Transverse colon (tissue), 4 donors: ENCODE measurements at regions of chr5 and their contacts with region 1.

Region 1: GRCh38 chr5:72366324-72366976 is 46.3 kb downstream of the PTCD2 start:
- DNase-seq: peak; percentile 63
- H3K4me3 ChIP-seq: no peak overlapping the region
- H3K27ac ChIP-seq: no peak overlapping the region
- H3K4me1 ChIP-seq: peaks cover 0 to 8% (median 0%) of the 10 kb centered on the region in 4 donors
- H3K27me3 ChIP-seq: no peaks in the 10 kb centered on the region
- CTCF ChIP-seq: peak; percentile 69 to 75 (median 73)
- EP300 ChIP-seq: no peak
- POLR2A ChIP-seq: no peak

Region 2: GRCh38 chr5:72816311-72817145 is 450.1 kb after region 1 on chr5 and contains the start of gene TNPO1:
- in situ Hi-C with region 1: loop called in 2 of 4 experiments (anchors 25 kb)
- intact Hi-C with region 1: loop called (anchors 5 kb)
- DNase-seq: peak; percentile 94
- H3K4me3 ChIP-seq: peak within 1 kb of the TSS; percentile 61 to 90 (median 86)
- H3K27ac ChIP-seq: peak within 1 kb of the TSS; percentile 98 to 99 (median 99)
- H3K4me1 ChIP-seq: peaks cover 7 to 36% (median 19%) of the 10 kb centered on the region in 4 donors
- H3K27me3 ChIP-seq: no peaks in the 10 kb centered on the region
- CTCF ChIP-seq: no peak
- EP300 ChIP-seq: no peak
- POLR2A ChIP-seq: peak; percentile 96
- total RNA-seq, gene TNPO1: 30.3 to 391 (median 102) TPM

Region 3: GRCh38 chr5:72883864-72884263 is 517.4 kb after region 1 on chr5:
- in situ Hi-C with region 1: no loop called
- intact Hi-C with region 1: loop called (anchors 5 kb)
- DNase-seq: no peak
- H3K4me3 ChIP-seq: no peak overlapping the region
- H3K27ac ChIP-seq: no peak overlapping the region
- H3K4me1 ChIP-seq: no peaks in the 10 kb centered on the region
- H3K27me3 ChIP-seq: no peaks in the 10 kb centered on the region
- CTCF ChIP-seq: no peak
- EP300 ChIP-seq: no peak
- POLR2A ChIP-seq: no peak